ENCODE measurements at regions of chrX and their contacts with region 1.

Region 1: DNA sequence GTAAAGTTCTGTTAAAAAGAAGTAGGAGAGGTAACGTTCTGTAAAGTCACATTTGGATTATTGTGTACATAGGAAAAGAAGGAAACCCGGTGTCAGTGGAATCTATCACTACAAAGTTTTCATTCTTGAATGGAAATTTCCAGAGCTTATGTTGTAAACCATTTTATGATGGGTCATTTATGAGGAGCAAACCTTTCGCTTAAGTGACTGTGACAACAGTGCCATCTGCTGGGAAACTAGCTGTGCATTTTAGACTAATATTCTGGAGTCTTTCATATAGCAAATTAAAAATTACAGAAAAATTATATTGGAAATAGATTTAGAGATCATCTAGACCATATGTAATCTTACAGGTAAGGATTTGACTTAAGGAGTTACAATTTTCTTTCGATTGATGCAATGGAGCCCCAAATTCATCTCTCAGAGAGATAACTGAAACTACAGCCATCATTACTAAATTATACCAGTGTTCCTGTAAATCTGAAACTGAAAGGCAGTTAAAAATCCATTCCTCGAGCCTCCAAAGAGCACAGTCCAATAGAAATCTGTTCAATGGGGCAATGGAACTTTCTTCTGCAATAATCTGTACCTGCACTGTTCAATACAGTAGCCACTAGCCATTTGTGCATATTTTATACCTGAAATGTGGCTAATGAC is 26.9 kb downstream of the ASB9 start:
- DNase-seq: peak; percentile 36
- H3K4me3 Mint-ChIP-seq: no peak overlapping the region
- H3K27ac Mint-ChIP-seq: no peak overlapping the region
- H3K4me1 Mint-ChIP-seq: no peaks in the 10 kb centered on the region
- H3K27me3 Mint-ChIP-seq: no peaks in the 10 kb centered on the region
- CTCF ChIP-seq: peak; percentile 39

Region 2: GRCh38 chrX:14039344-14039743 is 1203.7 kb before region 1 on chrX:
- CTCF ChIA-PET with region 1: no interaction called
- intact Hi-C with region 1: loop called (anchors 2 kb)
- DNase-seq: peak; percentile 56
- H3K4me3 Mint-ChIP-seq: no peak overlapping the region
- H3K27ac Mint-ChIP-seq: no peak overlapping the region
- H3K4me1 Mint-ChIP-seq: no peaks in the 10 kb centered on the region
- H3K27me3 Mint-ChIP-seq: no peaks in the 10 kb centered on the region
- CTCF ChIP-seq: peak; percentile 34

Region 3: DNA sequence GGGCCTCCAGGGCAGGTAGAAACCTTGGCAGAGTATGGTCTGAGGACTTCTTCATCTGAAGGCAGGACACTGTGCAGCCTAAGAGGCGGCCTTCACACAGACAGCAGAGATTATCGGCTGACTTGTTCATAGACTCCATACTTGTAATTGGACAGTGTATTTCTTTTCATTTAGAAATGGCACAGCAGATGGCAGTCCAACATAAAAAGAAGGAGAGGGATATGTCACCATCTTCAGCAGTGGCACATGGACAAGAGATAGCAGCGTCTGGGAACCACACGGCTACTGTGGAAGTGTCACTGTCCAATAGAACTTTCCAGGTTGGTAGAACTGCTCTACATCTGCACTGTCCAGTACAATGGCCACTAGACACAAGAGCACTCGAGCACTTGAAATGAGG is 1191.6 kb before region 1 on chrX:
- CTCF ChIA-PET with region 1: no interaction called
- intact Hi-C with region 1: loop called (anchors 5 kb)
- DNase-seq: no peak
- H3K4me3 Mint-ChIP-seq: no peak overlapping the region
- H3K27ac Mint-ChIP-seq: no peak overlapping the region
- H3K4me1 Mint-ChIP-seq: peaks cover 7% of the 10 kb centered on the region
- H3K27me3 Mint-ChIP-seq: no peaks in the 10 kb centered on the region
- CTCF ChIP-seq: no peak

Region 4: GRCh38 chrX:15107367-15107988 is 135.5 kb before region 1 on chrX:
- CTCF ChIA-PET with region 1: interaction called, 3 read pairs
- intact Hi-C with region 1: loop called (anchors 2 kb)
- DNase-seq: peak; percentile 2
- H3K4me3 Mint-ChIP-seq: no peak overlapping the region
- H3K27ac Mint-ChIP-seq: no peak overlapping the region
- H3K4me1 Mint-ChIP-seq: peaks cover 17% of the 10 kb centered on the region
- H3K27me3 Mint-ChIP-seq: no peaks in the 10 kb centered on the region
- CTCF ChIP-seq: peak; percentile 25

Region 5: GRCh38 chrX:15143050-15143824 is 99.8 kb before region 1 on chrX:
- CTCF ChIA-PET with region 1: interaction called, 8 read pairs
- intact Hi-C with region 1: loop called (anchors 1 kb)
- DNase-seq: peak; percentile 56
- H3K4me3 Mint-ChIP-seq: no peak overlapping the region
- H3K27ac Mint-ChIP-seq: no peak overlapping the region
- H3K4me1 Mint-ChIP-seq: peaks cover 13% of the 10 kb centered on the region
- H3K27me3 Mint-ChIP-seq: no peaks in the 10 kb centered on the region
- CTCF ChIP-seq: peak; percentile 64

Region 6: DNA sequence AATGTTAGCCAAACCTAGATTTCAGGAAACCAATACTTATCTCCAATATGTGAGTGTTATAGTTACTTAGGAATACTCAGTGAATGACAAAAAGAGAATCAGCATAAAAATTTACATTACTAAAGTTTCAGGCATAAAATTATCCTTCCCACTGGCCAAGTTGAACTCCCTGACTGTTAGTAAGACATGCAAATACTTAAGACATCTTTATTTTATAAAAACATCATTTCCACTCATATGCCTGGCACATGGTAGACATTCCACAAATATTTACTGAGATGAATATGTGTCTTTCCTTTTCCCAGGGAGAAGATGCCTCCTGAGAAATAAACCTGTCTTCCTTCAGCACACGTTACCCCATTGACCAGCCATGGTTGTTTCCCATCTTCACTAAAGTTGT is 133.9 kb after region 1 on chrX:
- CTCF ChIA-PET with region 1: no interaction called
- intact Hi-C with region 1: no loop called
- DNase-seq: no peak
- H3K4me3 Mint-ChIP-seq: no peak overlapping the region
- H3K27ac Mint-ChIP-seq: no peak overlapping the region
- H3K4me1 Mint-ChIP-seq: no peaks in the 10 kb centered on the region
- H3K27me3 Mint-ChIP-seq: no peaks in the 10 kb centered on the region
- CTCF ChIP-seq: no peak